H1 (cell line): ENCODE measurements at regions of chr7 and their contacts with region 1.

Region 1: DNA sequence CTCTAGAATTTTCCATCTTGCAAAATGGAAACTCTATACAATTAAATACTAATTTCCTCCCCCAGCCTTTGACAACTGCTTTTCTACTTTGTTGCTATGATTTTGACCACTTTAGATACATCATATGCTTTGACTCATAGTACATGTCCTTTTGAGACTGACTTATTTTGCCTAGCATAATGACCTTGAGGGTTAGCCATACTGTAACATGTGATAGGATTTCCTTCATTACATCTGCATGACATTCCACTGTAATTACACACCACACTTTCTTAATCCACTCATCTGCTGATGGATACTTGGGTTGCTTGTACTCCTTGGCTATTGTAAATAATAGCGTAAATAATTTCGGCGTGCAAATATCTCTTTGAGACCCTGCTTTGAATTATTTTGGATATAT is 127.7 kb downstream of the JAZF1 start:
- DNase-seq: no peak
- H3K4me3 ChIP-seq: no peak overlapping the region
- H3K27ac ChIP-seq: no peak overlapping the region
- H3K4me1 ChIP-seq: peaks cover 0 to 3% (median 0%) of the 10 kb centered on the region in 4 experiments; a peak in 1 of 7 replicates
- H3K27me3 ChIP-seq: no peaks in the 10 kb centered on the region
- CTCF ChIP-seq: no peak
- EP300 ChIP-seq: no peak
- POLR2A ChIP-seq: no peak
- RAD21 ChIP-seq: no peak

Region 2: GRCh38 chr7:27873981-27874957 is 178.7 kb before region 1 on chr7:
- CTCF ChIA-PET with region 1: no interaction called
- POLR2A ChIA-PET with region 1: no interaction called
- DNase-seq: no peak
- H3K4me3 ChIP-seq: no peak overlapping the region
- H3K27ac ChIP-seq: peak overlapping the region; percentile 44; the same call in 1 of the 2 replicates
- H3K4me1 ChIP-seq: peaks cover 0 to 2% (median 0%) of the 10 kb centered on the region in 4 experiments; a peak in 3 of 7 replicates
- H3K27me3 ChIP-seq: no peaks in the 10 kb centered on the region
- CTCF ChIP-seq: no peak
- EP300 ChIP-seq: no peak
- POLR2A ChIP-seq: no peak
- RAD21 ChIP-seq: no peak

Region 3: GRCh38 chr7:28037220-28038010 is 15.5 kb before region 1 on chr7:
- CTCF ChIA-PET with region 1: interaction called, 15 read pairs
- POLR2A ChIA-PET with region 1: interaction called, 3 read pairs
- DNase-seq: no peak
- H3K4me3 ChIP-seq: no peak overlapping the region
- H3K27ac ChIP-seq: no peak overlapping the region
- H3K4me1 ChIP-seq: peaks cover 0 to 3% (median under 1%) of the 10 kb centered on the region in 4 experiments; a peak in 2 of 7 replicates
- H3K27me3 ChIP-seq: no peaks in the 10 kb centered on the region
- CTCF ChIP-seq: no peak
- EP300 ChIP-seq: no peak
- POLR2A ChIP-seq: no peak
- RAD21 ChIP-seq: no peak

Region 4: GRCh38 chr7:28069807-28070206 is 16.9 kb after region 1 on chr7:
- CTCF ChIA-PET with region 1: interaction called, 16 read pairs
- POLR2A ChIA-PET with region 1: no interaction called
- DNase-seq: no peak
- H3K4me3 ChIP-seq: no peak overlapping the region
- H3K27ac ChIP-seq: no peak overlapping the region
- H3K4me1 ChIP-seq: peaks cover 0 to 3% (median 0%) of the 10 kb centered on the region in 4 experiments; a peak in 3 of 7 replicates
- H3K27me3 ChIP-seq: no peaks in the 10 kb centered on the region
- CTCF ChIP-seq: no peak
- EP300 ChIP-seq: no peak
- POLR2A ChIP-seq: no peak
- RAD21 ChIP-seq: no peak

Region 5: GRCh38 chr7:28078036-28078901 is 25.3 kb after region 1 on chr7:
- CTCF ChIA-PET with region 1: interaction called, 26 read pairs
- POLR2A ChIA-PET with region 1: interaction called, 3 read pairs
- DNase-seq: no peak
- H3K4me3 ChIP-seq: no peak overlapping the region
- H3K27ac ChIP-seq: no peak overlapping the region
- H3K4me1 ChIP-seq: peaks cover 0 to 4% (median 0%) of the 10 kb centered on the region in 4 experiments; a peak in 2 of 7 replicates
- H3K27me3 ChIP-seq: no peaks in the 10 kb centered on the region
- CTCF ChIP-seq: peak; percentile 6 to 97 (median 77)
- EP300 ChIP-seq: no peak
- POLR2A ChIP-seq: no peak
- RAD21 ChIP-seq: peak; percentile 65 to 68